PC-9 (cell line): ENCODE measurements at regions of chr3 and their contacts with region 1.

Region 1: GRCh38 chr3:43879166-43879565 is 188.4 kb downstream of the ABHD5 start:
- DNase-seq: peak; percentile 63 to 76
- H3K4me3 ChIP-seq: no peak overlapping the region
- H3K27ac ChIP-seq: peak overlapping the region; percentile 41; the same call in 1 of the 2 replicates
- H3K4me1 ChIP-seq: peaks cover 24% of the 10 kb centered on the region
- H3K27me3 ChIP-seq: no peaks in the 10 kb centered on the region
- CTCF ChIP-seq: peak; percentile 62

Region 2: DNA sequence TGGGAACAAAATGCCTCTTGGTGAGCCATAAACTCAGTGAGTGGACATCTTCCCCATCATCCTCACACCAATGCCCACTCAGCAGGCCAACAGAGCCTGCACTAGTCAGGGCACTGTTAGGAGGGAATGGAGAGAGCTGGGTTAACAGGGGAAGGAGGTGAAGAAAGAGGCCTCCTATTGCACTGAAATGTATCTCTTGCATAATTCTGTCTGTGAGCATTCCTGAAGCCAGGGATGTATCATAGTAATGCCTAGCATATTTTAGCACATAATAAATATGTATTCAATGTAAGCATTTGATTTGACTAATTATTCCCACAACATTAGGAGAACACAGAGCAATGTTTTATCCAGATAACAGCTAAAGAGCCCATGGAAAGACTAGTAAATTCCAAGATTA is 338.5 kb before region 1 on chr3:
- CTCF ChIA-PET with region 1: no interaction called
- POLR2A ChIA-PET with region 1: no interaction called
- intact Hi-C with region 1: loop called (anchors 10 kb)
- DNase-seq: no peak
- H3K4me3 ChIP-seq: no peak overlapping the region
- H3K27ac ChIP-seq: no peak overlapping the region
- H3K4me1 ChIP-seq: no peaks in the 10 kb centered on the region
- H3K27me3 ChIP-seq: no peaks in the 10 kb centered on the region
- CTCF ChIP-seq: no peak

Region 3: DNA sequence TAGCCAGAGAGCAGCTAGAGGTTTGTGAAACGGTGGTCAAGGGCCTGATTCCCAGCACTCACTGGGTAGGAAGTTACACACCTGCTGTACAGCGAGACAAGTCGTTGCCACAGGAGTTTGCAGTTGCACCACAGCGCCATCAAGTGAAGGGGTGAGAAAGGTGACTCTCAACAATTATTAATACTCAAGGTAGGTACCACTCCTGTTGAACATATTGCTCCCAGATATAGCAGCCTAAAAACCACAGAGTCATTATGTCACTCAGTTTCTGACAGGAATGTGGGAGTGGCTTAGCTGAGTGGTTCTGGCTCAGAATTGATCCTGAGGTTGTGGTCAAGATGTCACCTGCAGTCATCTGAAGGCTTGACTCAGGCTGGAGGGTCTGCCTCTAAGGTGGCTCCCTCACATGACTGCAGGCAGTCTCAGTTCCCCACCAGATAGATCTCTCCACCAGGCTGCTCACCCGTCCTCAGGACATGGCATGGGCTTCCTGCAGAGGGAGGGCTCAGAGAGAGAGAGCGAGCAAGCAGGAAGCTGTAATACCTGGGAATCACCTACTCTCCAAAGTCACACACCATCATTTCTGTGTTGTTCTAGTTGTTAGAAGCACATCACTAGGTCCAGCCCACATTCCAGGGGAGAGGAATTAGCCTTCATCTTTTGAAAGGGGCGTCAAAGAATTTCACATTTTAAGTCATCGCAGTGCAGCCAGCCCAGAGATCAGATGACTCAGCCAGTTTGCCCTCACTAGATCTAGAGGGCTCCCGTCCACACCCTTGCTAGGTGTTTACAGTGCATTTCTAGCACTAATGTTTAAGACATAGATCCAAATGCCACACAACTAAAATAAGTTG is 240.3 kb before region 1 on chr3:
- CTCF ChIA-PET with region 1: no interaction called
- POLR2A ChIA-PET with region 1: no interaction called
- intact Hi-C with region 1: loop called (anchors 10 kb)
- DNase-seq: peak; percentile 70 to 85
- H3K4me3 ChIP-seq: peak overlapping the region; percentile 18; the same call in 1 of the 2 replicates
- H3K27ac ChIP-seq: peak overlapping the region; percentile 78
- H3K4me1 ChIP-seq: peaks cover 23% of the 10 kb centered on the region
- H3K27me3 ChIP-seq: no peaks in the 10 kb centered on the region
- CTCF ChIP-seq: peak; percentile 59

Region 4: GRCh38 chr3:43894176-43895049 is 15.2 kb after region 1 on chr3:
- CTCF ChIA-PET with region 1: no interaction called
- POLR2A ChIA-PET with region 1: no interaction called
- intact Hi-C with region 1: loop called (anchors 2 kb)
- DNase-seq: peak in 1 of 2 experiments; percentile 58
- H3K4me3 ChIP-seq: peak overlapping the region; percentile 52
- H3K27ac ChIP-seq: no peak overlapping the region
- H3K4me1 ChIP-seq: no peaks in the 10 kb centered on the region
- H3K27me3 ChIP-seq: no peaks in the 10 kb centered on the region
- CTCF ChIP-seq: no peak

Region 5: GRCh38 chr3:43953814-43954692 is 74.9 kb after region 1 on chr3:
- CTCF ChIA-PET with region 1: interaction called, 15 read pairs
- POLR2A ChIA-PET with region 1: no interaction called
- intact Hi-C with region 1: no loop called
- DNase-seq: peak; percentile 41 to 71
- H3K4me3 ChIP-seq: no peak overlapping the region; the same call in 1 of the 2 replicates
- H3K27ac ChIP-seq: no peak overlapping the region
- H3K4me1 ChIP-seq: peaks cover 16% of the 10 kb centered on the region
- H3K27me3 ChIP-seq: no peaks in the 10 kb centered on the region
- CTCF ChIP-seq: no peak

Region 6: DNA sequence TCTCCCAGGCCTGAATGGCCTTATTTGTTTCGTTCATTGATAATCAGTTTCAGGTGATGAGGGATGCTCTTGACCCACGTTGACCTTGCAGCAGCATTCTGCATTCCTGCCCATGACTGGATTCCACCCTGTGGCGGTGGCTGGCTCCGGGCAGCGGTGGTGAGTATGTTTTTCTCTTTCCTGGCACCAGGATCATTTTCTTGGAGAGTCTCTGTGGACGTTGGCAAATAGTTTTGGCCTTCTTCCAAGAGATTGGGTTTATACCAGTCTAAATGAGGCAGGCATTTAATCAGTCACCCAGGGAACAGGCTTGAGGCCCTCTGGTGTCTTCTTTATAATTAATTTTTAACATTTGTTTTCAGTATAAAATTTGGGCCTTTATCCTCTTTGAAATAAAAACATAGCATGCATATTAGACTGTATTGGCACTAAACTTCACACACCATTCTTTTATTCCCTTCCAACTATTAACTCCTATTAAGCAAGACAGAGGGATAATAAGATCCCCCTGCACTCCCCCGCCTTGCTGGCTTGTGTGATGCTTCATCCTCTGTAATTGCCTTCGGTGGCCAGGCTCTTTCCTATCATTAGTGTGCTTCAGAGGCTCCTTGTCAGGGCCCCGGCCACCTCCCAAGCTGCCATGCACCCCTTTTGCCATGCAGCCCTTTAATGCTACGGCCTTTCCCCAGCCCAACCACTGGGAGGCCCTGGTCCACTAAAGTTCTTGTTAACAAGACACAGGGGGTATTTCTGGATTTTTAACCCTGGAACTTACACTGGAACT is 186.3 kb after region 1 on chr3:
- CTCF ChIA-PET with region 1: interaction called, 12 read pairs
- POLR2A ChIA-PET with region 1: no interaction called
- intact Hi-C with region 1: no loop called
- DNase-seq: peak in 1 of 2 experiments; percentile 38
- H3K4me3 ChIP-seq: no peak overlapping the region
- H3K27ac ChIP-seq: no peak overlapping the region
- H3K4me1 ChIP-seq: peaks cover 28% of the 10 kb centered on the region
- H3K27me3 ChIP-seq: no peaks in the 10 kb centered on the region
- CTCF ChIP-seq: no peak; the same call in 1 of the 2 replicates

Region 7: GRCh38 chr3:44198284-44199269 is 319.4 kb after region 1 on chr3:
- CTCF ChIA-PET with region 1: no interaction called
- POLR2A ChIA-PET with region 1: no interaction called
- intact Hi-C with region 1: loop called (anchors 5 kb)
- DNase-seq: peak; percentile 59 to 78
- H3K4me3 ChIP-seq: no peak overlapping the region
- H3K27ac ChIP-seq: no peak overlapping the region
- H3K4me1 ChIP-seq: no peaks in the 10 kb centered on the region
- H3K27me3 ChIP-seq: no peaks in the 10 kb centered on the region
- CTCF ChIP-seq: peak; percentile 79